Astrocyte of the cerebellum (primary cell): ENCODE measurements at regions of chr14 and their contacts with region 1.

Region 1: GRCh38 chr14:93137864-93138263 is 22.1 kb upstream of the ITPK1 start:
- DNase-seq: no peak
- H3K4me3 ChIP-seq: no peak overlapping the region
- CTCF ChIP-seq: no peak

Region 2: DNA sequence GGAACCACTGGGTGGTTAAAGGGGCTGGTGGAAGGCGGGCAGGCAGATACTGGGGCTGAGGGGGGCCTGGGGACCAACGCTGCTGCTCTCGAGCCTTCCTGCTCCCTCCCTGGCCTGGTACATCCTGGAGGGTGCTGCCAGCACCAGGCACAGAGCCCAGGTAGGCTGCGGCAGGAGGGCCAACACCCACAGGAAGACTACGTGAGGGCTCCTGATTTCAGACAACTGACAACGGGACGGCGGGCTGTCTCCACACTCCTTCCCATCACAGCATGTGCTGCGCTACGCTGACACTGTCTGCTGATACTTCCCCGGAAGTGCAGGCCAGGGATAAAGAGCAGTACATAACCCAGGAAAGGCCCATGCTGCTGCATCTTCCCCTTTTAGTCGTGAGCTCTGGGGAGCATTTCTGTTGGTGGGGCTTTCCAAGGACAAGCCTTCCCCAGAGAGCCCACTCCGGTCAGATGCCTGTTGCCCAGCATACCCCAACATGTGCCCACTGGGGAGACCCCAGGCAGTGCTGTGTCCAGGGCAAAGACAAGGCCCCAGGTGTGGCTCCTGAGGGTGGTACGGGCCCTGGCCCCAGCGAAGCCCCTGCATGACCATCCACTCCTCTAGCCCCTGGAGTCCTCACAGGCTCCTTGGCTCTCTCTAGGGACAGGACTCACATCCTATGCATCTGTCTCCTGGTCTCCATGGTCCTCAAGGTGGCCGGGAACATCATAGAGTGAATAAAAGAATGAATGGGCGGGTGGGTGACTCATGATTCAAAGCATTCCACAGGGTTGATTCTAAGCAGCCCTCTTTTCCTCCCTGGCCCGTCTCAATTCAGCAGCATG is 176.9 kb before region 1 on chr14:
- in situ Hi-C with region 1: loop called (anchors 5 kb)
- DNase-seq: no peak
- H3K4me3 ChIP-seq: no peak overlapping the region
- CTCF ChIP-seq: no peak

Region 3: GRCh38 chr14:93081876-93082570 is 55.8 kb before region 1 on chr14:
- in situ Hi-C with region 1: loop called (anchors 5 kb)
- DNase-seq: no peak
- H3K4me3 ChIP-seq: no peak overlapping the region
- CTCF ChIP-seq: no peak